Activated CD4-positive, alpha-beta T cell treated with anti-CD3 and anti-CD28 coated beads for 36 hours (primary cell): ENCODE measurements at regions of chr6 and their contacts with region 1.

Region 1: GRCh38 chr6:10429638-10430427 is 15.0 kb upstream of the TFAP2A start:
- DNase-seq: no peak
- ATAC-seq: peak; percentile 65
- H3K4me3 Mint-ChIP-seq: peak overlapping the region; percentile 11
- H3K27ac Mint-ChIP-seq: peak overlapping the region; percentile 55
- H3K4me1 Mint-ChIP-seq: peaks cover 19% of the 10 kb centered on the region
- H3K27me3 Mint-ChIP-seq: peaks cover 59% of the 10 kb centered on the region

Region 2: GRCh38 chr6:9044426-9044825 is 1385.4 kb before region 1 on chr6:
- CTCF ChIA-PET with region 1: no interaction called
- POLR2A ChIA-PET with region 1: no interaction called
- intact Hi-C with region 1: no loop called
- DNase-seq: no peak
- ATAC-seq: no peak
- H3K4me3 Mint-ChIP-seq: no peak overlapping the region
- H3K27ac Mint-ChIP-seq: no peak overlapping the region
- H3K4me1 Mint-ChIP-seq: no peaks in the 10 kb centered on the region
- H3K27me3 Mint-ChIP-seq: no peaks in the 10 kb centered on the region

Region 3: GRCh38 chr6:9250852-9251251 is 1179.0 kb before region 1 on chr6:
- CTCF ChIA-PET with region 1: no interaction called
- POLR2A ChIA-PET with region 1: no interaction called
- intact Hi-C with region 1: loop called (anchors 2 to 5 kb)
- DNase-seq: peak; percentile 14
- ATAC-seq: no peak
- H3K4me3 Mint-ChIP-seq: no peak overlapping the region
- H3K27ac Mint-ChIP-seq: no peak overlapping the region
- H3K4me1 Mint-ChIP-seq: no peaks in the 10 kb centered on the region
- H3K27me3 Mint-ChIP-seq: no peaks in the 10 kb centered on the region

Region 4: GRCh38 chr6:9540534-9541126 is 889.2 kb before region 1 on chr6:
- CTCF ChIA-PET with region 1: interaction called, 3 read pairs
- POLR2A ChIA-PET with region 1: no interaction called
- intact Hi-C with region 1: loop called (anchors 1 to 5 kb)
- DNase-seq: peak; percentile 8
- ATAC-seq: peak; percentile 51
- H3K4me3 Mint-ChIP-seq: no peak overlapping the region
- H3K27ac Mint-ChIP-seq: no peak overlapping the region
- H3K4me1 Mint-ChIP-seq: no peaks in the 10 kb centered on the region
- H3K27me3 Mint-ChIP-seq: peaks cover 2% of the 10 kb centered on the region

Region 5: DNA sequence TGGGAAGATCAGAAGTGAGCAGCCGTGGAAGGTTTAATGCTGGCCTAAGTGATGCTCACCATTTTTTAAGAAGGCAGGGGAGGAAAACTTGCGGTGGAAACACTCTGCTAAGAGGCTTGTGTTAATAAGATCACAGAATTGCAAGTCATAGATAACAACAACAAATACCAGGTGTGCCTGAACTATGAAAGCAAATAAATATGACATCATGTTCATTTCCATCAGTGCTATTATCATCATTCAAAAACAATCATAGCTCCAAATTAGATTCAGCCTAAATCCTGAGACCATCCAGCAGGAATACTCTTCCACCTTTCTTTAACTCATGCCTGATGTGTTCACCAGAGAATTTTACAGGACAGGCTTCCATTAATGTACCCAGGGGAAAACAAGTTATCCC is 656.9 kb before region 1 on chr6:
- CTCF ChIA-PET with region 1: no interaction called
- POLR2A ChIA-PET with region 1: no interaction called
- intact Hi-C with region 1: loop called in 1 of 2 experiments (anchors 10 kb)
- DNase-seq: no peak
- ATAC-seq: no peak
- H3K4me3 Mint-ChIP-seq: no peak overlapping the region
- H3K27ac Mint-ChIP-seq: no peak overlapping the region
- H3K4me1 Mint-ChIP-seq: no peaks in the 10 kb centered on the region
- H3K27me3 Mint-ChIP-seq: no peaks in the 10 kb centered on the region

Region 6: DNA sequence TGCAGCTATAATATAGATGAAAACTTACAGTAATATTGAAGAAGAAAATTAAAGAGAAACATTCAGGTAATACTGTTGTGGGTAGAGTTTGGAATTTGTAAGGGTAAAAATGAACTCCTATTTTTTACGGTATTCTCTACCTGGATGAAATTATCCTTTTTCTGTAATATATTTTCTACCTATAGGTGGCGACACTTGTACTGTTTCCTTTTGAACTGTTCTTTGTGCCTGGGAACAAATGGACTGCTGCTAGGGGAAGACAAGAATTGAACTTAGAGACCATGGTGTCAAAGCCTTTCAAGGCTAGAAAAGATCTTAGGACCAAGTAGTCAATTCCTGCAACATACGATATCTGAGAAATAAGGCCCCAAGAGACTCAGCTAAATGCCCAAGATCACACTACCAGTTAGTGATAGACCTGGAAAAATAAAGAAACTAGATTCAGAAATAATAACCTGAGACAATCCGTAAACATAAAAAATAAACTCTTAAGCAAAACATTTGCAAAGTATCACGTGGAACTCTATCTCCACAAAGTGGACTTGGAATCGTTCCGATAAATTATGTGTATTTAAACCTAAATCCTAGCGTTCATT is 398.8 kb before region 1 on chr6:
- CTCF ChIA-PET with region 1: interaction called, 3 read pairs
- POLR2A ChIA-PET with region 1: no interaction called
- intact Hi-C with region 1: loop called (anchors 1 to 2 kb)
- DNase-seq: no peak
- ATAC-seq: no peak
- H3K4me3 Mint-ChIP-seq: no peak overlapping the region
- H3K27ac Mint-ChIP-seq: no peak overlapping the region
- H3K4me1 Mint-ChIP-seq: no peaks in the 10 kb centered on the region
- H3K27me3 Mint-ChIP-seq: no peaks in the 10 kb centered on the region

Region 7: DNA sequence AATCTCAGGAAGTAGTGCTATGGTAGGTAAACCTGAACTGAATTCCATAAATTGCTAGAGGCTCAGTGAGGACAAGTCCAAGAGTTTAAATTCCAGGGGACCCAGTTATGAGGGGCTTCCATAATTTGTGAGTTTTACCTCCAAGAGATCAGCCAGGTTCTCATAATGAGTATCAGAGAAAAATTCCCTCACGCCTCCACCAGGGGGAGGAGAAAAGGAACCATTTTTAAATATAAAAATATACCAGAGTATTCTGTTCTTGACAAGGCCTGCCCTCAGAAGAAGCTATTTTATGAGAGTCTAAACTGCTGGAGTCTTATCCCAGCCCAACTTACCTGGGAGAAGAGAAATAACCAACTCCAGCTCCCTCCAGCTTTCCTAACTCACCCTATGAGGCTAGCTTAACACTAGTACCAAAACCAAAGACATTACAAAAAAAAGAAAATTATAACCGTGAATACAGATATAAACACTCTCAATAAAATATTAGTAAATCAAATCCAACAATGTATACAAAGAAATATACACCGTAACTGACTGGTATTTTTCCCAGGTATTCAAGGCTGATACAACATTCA is 173.6 kb before region 1 on chr6:
- CTCF ChIA-PET with region 1: interaction called, 5 read pairs
- POLR2A ChIA-PET with region 1: no interaction called
- intact Hi-C with region 1: loop called (anchors 5 kb)
- DNase-seq: peak; percentile 8
- ATAC-seq: no peak
- H3K4me3 Mint-ChIP-seq: no peak overlapping the region
- H3K27ac Mint-ChIP-seq: no peak overlapping the region
- H3K4me1 Mint-ChIP-seq: no peaks in the 10 kb centered on the region
- H3K27me3 Mint-ChIP-seq: no peaks in the 10 kb centered on the region

Region 8: DNA sequence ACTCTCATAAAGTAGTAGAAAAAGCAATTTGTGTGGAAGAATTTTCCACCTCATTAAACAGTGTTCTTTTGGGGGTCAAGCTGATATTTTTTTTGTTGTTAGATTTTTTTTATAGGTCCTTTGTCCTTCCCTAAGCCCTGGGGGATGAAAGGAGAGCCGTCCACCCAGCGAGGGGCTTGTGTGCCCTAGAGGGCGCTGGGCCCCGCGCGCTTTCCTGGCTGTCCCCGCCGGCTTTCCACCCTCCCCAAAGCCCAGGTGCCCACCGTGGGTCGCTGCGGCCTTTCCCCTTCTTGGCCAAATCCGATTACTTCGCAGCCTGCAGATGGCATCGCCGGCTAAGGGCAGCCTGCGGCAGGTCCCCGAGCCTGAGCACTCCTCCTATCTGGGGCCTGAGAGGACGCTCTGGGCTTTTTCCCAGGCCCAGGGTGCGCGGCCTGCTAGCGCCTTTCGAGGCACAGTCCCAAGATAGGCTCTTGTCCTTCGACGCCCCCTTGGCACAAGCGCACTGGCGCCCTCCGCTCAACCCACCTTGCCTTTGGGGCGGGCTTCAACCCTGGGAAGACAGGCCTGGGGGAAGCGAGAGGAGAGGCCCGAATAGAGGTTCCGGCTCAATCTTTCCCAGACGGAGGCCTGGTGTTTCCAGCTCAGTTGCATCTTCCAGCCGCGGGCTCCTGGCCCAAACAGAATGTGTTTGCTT is 48.6 kb before region 1 on chr6:
- CTCF ChIA-PET with region 1: interaction called, 3 read pairs
- POLR2A ChIA-PET with region 1: no interaction called
- intact Hi-C with region 1: loop called in 1 of 2 experiments (anchors 2 kb)
- DNase-seq: peak; percentile 39
- ATAC-seq: no peak
- H3K4me3 Mint-ChIP-seq: no peak overlapping the region
- H3K27ac Mint-ChIP-seq: no peak overlapping the region
- H3K4me1 Mint-ChIP-seq: peaks cover 14% of the 10 kb centered on the region
- H3K27me3 Mint-ChIP-seq: peaks cover 67% of the 10 kb centered on the region